Mammary epithelial cell (primary cell): ENCODE measurements at regions of chrX and their contacts with region 1.

Region 1: GRCh38 chrX:65581661-65582339 is 47.2 kb upstream of the LAS1L start:
- DNase-seq: peak; percentile 49
- H3K4me3 ChIP-seq: no peak overlapping the region
- H3K27ac ChIP-seq: no peak overlapping the region
- H3K4me1 ChIP-seq: no peaks in the 10 kb centered on the region
- H3K27me3 ChIP-seq: no peaks in the 10 kb centered on the region
- CTCF ChIP-seq: peak; percentile 72 to 75

Region 2: GRCh38 chrX:65516756-65517155 is 65.0 kb before region 1 on chrX:
- CTCF ChIA-PET with region 1: no interaction called
- dilution Hi-C with region 1: no loop called
- in situ Hi-C with region 1: no loop called
- intact Hi-C with region 1: no loop called
- DNase-seq: no peak
- H3K4me3 ChIP-seq: no peak overlapping the region
- H3K27ac ChIP-seq: no peak overlapping the region
- H3K4me1 ChIP-seq: no peaks in the 10 kb centered on the region
- H3K27me3 ChIP-seq: no peaks in the 10 kb centered on the region
- CTCF ChIP-seq: no peak

Region 3: GRCh38 chrX:65874765-65875164 is 293.0 kb after region 1 on chrX:
- CTCF ChIA-PET with region 1: no interaction called
- dilution Hi-C with region 1: no loop called
- in situ Hi-C with region 1: no loop called
- intact Hi-C with region 1: no loop called
- DNase-seq: peak; percentile 16
- H3K4me3 ChIP-seq: no peak overlapping the region
- H3K27ac ChIP-seq: no peak overlapping the region
- H3K4me1 ChIP-seq: peaks cover 6% of the 10 kb centered on the region
- H3K27me3 ChIP-seq: no peaks in the 10 kb centered on the region
- CTCF ChIP-seq: no peak

Region 4: GRCh38 chrX:66110112-66110511 is 528.3 kb after region 1 on chrX:
- CTCF ChIA-PET with region 1: no interaction called
- dilution Hi-C with region 1: no loop called
- in situ Hi-C with region 1: no loop called
- intact Hi-C with region 1: loop called (anchors 1 kb)
- DNase-seq: peak; percentile 6
- H3K4me3 ChIP-seq: no peak overlapping the region
- H3K27ac ChIP-seq: no peak overlapping the region
- H3K4me1 ChIP-seq: no peaks in the 10 kb centered on the region
- H3K27me3 ChIP-seq: no peaks in the 10 kb centered on the region
- CTCF ChIP-seq: peak; percentile 39 to 55